Activated CD4-positive, alpha-beta T cell treated with anti-CD3 and anti-CD28 coated beads, Interleukin-2, amount 10 ng/mL, durations not matched to agents 7 days and 5 days (primary cell): ENCODE measurements at regions of chr1 and their contacts with region 1.

Region 1: GRCh38 chr1:44721485-44722361 is 9.2 kb downstream of the RNU5D-1 start:
- DNase-seq: peak; percentile 85
- H3K4me3 Mint-ChIP-seq: peak overlapping the region; percentile 43
- H3K27ac Mint-ChIP-seq: peak overlapping the region; percentile 97
- H3K4me1 Mint-ChIP-seq: peaks cover 72% of the 10 kb centered on the region
- H3K27me3 Mint-ChIP-seq: no peaks in the 10 kb centered on the region

Region 2: DNA sequence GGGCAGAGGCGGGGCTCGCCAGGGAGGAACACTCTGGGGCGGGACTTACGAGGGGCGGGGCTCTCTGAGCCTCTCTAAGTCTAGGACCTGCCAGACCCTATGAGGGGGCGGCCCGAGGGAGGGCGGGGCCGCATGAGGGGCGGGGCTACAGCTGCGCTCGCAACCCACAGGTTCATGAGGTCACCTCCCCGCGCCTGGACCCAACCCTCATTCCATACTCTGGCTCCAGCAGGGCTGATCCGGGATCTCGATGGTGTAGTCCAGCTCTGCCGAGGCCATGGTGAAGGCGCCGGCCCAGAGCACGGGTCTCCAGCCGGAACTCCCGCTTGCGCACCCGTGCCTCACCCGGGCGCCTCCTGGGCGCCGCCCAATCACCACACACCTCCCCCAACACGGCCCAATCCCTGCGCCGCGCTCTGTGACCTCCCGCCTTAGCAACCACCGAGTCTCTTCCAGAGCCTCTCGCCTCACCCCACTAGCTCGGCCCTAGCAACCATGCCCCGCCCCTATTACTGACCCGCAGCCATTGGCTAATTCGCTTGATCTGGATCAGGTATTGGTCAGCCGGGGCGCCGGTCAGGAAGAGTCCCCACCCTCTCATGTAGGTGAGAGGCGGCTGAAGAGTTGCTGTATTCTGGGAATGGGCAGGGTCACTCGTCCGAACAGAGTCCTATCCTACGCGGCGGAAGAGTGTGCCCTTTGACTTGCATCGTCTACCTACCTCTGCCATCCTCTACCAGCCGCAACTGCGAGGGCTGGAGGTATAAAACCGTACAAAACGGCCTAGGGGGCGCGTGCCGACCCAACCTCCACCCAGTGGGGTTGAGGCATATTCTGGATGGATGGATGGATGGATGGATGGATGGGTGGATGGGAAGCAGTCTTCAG is 47.4 kb before region 1 on chr1 and contains the starts of genes ARMH1 and TMEM53:
- CTCF ChIA-PET with region 1: no interaction called
- POLR2A ChIA-PET with region 1: interaction called, 17 read pairs
- DNase-seq: peak; percentile 99
- H3K4me3 Mint-ChIP-seq: peak within 1 kb of the TSS; percentile 83
- H3K27ac Mint-ChIP-seq: peak within 1 kb of the TSS; percentile 82
- H3K4me1 Mint-ChIP-seq: peaks cover 32% of the 10 kb centered on the region
- H3K27me3 Mint-ChIP-seq: no peaks in the 10 kb centered on the region
- total RNA-seq, gene ARMH1: 47.4 to 50.7 TPM
- total RNA-seq, gene TMEM53: 3.0 to 3.5 TPM

Region 3: DNA sequence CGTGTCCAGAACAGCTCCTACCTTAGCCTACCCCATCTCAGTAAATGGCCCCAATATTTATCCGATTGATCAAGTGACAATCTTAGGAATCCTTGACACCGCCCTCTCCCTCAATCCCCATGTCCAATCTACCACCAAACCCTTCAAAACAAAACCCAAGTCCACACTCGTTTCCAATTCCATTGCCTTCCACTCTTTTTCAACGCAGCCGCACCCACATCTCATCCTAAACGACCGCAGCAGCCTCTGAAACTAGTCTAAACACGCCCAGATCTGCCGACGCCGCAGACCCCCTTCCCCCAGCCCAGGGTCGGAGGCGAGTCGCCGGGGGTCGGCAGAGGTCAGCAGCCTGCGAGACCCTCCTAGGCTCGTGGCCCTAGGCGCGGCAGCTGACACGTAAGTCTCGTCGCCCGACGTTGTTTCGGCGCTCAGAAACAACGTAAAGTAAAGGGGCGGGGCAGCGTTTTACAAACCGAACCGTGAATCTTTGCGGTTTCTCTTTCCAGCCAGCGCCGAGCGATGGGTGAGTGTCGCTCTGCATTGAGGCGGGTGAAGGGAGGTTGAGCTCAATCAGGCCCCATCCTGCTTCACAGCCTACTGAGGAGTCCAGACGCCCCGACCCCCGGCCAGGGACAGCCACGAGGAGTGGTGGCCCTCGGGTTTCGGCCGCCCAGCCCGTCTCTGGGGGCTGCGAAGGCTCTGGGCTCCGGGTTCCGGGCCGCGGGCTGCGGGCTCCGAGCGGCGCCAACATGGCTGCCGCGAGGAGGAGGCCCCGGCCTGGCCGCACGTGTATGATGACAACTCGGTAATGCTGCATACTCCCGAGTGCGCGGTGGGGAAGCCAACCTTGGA is 53.6 kb after region 1 on chr1 and contains the start of gene RPS8:
- CTCF ChIA-PET with region 1: no interaction called
- POLR2A ChIA-PET with region 1: interaction called, 15 read pairs
- DNase-seq: peak; percentile 94
- H3K4me3 Mint-ChIP-seq: peak within 1 kb of the TSS; percentile 82
- H3K27ac Mint-ChIP-seq: peak within 1 kb of the TSS; percentile 94
- H3K4me1 Mint-ChIP-seq: peaks cover 40% of the 10 kb centered on the region
- H3K27me3 Mint-ChIP-seq: no peaks in the 10 kb centered on the region
- total RNA-seq, gene RPS8: 1,879 to 1,968 TPM

Region 4: DNA sequence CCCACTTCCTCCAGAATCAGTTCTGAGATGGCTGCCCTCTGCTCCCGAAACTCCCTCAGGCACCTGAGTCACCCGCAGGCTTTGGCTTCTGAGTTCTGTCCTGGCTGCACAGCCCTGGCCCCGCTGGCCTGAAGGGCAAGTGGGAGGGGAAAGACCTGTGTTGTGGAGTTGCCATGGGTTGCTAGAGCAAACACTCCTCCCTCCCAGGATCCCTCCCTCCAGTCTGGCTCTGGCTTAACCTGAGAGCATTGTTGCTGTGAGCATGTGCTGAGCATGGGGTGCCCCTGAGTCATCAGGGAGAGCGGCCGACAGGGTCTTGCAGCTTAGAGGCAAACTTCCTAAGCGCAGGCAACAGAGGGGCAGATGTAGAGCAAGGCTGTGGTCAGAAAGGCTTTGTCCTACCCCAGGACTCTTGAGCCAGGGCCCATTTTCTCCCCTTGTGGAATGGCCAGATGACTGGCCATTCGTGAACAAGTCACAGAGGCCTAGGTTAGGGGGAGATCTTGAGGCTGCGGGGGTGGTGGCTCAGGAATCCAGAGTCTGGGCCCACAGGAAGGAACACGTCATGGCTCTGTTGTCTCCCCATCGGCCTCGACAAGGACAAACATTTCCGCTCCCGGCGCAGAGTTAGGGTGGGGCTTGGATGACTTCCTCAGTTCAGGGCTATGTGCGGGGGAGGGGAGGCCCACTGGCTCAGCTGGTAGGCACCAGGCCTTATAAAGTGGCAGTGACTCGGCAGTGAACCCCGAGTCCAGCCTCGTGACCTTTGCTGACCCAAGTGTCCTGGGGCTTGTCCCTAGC is 85.7 kb after region 1 on chr1 and contains the start of gene DYNLT4:
- CTCF ChIA-PET with region 1: no interaction called
- POLR2A ChIA-PET with region 1: interaction called, 31 read pairs
- DNase-seq: peak; percentile 95
- H3K4me3 Mint-ChIP-seq: peak within 1 kb of the TSS; percentile 71
- H3K27ac Mint-ChIP-seq: peak within 1 kb of the TSS; percentile 100
- H3K4me1 Mint-ChIP-seq: peaks cover 86% of the 10 kb centered on the region
- H3K27me3 Mint-ChIP-seq: no peaks in the 10 kb centered on the region
- total RNA-seq, gene DYNLT4: 0.47 to 0.83 TPM

Region 5: DNA sequence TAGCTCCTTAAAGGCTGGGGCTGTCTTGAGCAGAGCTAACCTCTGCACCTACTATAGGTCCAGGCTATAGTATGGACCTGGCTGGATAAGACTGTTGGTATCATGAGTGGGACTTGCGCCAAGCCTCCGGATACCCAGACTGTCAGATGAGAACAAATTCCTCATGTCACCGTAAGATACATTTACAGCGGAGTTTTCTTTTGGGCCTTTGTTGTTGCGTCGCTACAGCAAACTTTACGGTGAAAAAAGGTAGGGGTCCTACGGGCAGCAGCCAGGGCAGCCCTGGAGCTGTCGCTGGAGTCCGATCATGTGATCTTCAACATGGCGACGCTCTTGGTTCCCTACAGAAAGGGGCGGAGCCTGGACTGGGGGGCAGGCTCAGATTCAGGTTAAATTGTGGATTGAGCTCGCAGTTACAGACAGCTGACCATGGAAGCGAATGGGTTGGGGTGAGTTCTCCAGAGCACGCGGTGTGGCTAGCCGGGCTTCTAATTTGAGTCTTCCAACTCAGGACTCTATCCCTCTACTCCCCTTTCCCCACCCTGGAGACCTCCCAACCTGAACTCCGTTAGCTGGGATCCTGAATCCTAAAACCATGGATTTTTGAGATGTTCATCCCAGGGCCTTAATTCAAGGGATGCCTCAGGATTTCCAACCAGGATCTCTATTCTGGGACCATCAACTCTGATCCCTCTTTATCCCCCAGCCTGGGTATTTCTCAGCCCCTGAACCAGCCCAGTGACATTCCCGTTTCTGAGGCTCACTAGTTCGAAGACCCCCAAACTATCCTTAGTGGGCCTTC is 290.3 kb after region 1 on chr1 and contains the start of gene UROD:
- CTCF ChIA-PET with region 1: no interaction called
- POLR2A ChIA-PET with region 1: interaction called, 13 read pairs
- DNase-seq: peak; percentile 94
- H3K4me3 Mint-ChIP-seq: peak within 1 kb of the TSS; percentile 79
- H3K27ac Mint-ChIP-seq: peak within 1 kb of the TSS; percentile 92
- H3K4me1 Mint-ChIP-seq: peaks cover 43% of the 10 kb centered on the region
- H3K27me3 Mint-ChIP-seq: no peaks in the 10 kb centered on the region
- total RNA-seq, gene UROD: 66.4 to 70.7 TPM